Heart right ventricle (tissue), 16 donors: ENCODE measurements at regions of chr6 and their contacts with region 1.

Region 1: GRCh38 chr6:26025894-26026832 is 61.1 kb upstream of the HFE start:
- DNase-seq: peak; percentile 90 to 96
- ATAC-seq: peak; percentile 65 to 83 (median 74)
- H3K4me3 ChIP-seq: peak overlapping the region; percentile 51 to 79 (median 68)
- H3K27ac ChIP-seq: peak overlapping the region; percentile 86 to 96 (median 91)
- H3K4me1 ChIP-seq: peaks cover 0 to 52% (median 10%) of the 10 kb centered on the region in 9 donors
- H3K27me3 ChIP-seq: no peaks in the 10 kb centered on the region
- CTCF ChIP-seq: peak; percentile 48 to 93 (median 83)

Region 2: GRCh38 chr6:24720604-24721460 is 1305.3 kb before region 1 on chr6:
- intact Hi-C with region 1: loop called in 1 of 10 experiments (anchors 10 kb)
- DNase-seq: peak; percentile 100
- ATAC-seq: peak; percentile 93 to 97 (median 96)
- H3K4me3 ChIP-seq: peak overlapping the region; percentile 70 to 98 (median 86)
- H3K27ac ChIP-seq: peak overlapping the region; percentile 97 to 100 (median 99)
- H3K4me1 ChIP-seq: peaks cover 6 to 44% (median 33%) of the 10 kb centered on the region in 9 donors
- H3K27me3 ChIP-seq: no peaks in the 10 kb centered on the region
- CTCF ChIP-seq: no peak

Region 3: DNA sequence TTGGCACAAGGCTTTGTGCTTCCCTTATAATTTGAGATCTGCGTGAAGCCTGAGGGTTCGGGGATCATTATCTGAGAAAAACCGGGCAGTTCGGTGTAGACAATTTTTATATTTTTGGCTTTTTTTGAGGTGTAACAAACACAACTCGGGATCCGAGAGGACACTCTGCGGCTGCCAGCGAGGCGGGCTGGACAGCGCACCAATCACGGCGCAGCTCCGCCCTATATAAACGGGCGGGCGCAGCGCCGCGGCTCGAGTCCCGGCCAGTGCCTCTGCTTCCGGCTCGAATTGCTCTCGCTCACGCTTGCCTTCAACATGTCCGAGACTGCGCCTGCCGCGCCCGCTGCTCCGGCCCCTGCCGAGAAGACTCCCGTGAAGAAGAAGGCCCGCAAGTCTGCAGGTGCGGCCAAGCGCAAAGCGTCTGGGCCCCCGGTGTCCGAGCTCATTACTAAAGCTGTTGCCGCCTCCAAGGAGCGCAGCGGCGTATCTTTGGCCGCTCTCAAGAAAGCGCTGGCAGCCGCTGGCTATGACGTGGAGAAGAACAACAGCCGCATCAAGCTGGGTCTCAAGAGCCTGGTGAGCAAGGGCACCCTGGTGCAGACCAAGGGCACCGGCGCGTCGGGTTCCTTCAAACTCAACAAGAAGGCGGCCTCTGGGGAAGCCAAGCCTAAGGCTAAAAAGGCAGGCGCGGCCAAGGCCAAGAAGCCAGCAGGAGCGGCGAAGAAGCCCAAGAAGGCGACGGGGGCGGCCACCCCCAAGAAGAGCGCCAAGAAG is 130.1 kb after region 1 on chr6:
- intact Hi-C with region 1: loop called in 1 of 10 experiments (anchors 2 kb)
- DNase-seq: peak; percentile 90
- ATAC-seq: peak; percentile 85 to 92 (median 88)
- H3K4me3 ChIP-seq: peak overlapping the region; percentile 52 to 97 (median 79)
- H3K27ac ChIP-seq: peak overlapping the region; percentile 81 to 98 (median 94)
- H3K4me1 ChIP-seq: peaks cover 4 to 31% (median 21%) of the 10 kb centered on the region in 9 donors
- H3K27me3 ChIP-seq: no peaks in the 10 kb centered on the region
- CTCF ChIP-seq: peak in 2 of 9 donors; percentile 8 to 15

Region 4: DNA sequence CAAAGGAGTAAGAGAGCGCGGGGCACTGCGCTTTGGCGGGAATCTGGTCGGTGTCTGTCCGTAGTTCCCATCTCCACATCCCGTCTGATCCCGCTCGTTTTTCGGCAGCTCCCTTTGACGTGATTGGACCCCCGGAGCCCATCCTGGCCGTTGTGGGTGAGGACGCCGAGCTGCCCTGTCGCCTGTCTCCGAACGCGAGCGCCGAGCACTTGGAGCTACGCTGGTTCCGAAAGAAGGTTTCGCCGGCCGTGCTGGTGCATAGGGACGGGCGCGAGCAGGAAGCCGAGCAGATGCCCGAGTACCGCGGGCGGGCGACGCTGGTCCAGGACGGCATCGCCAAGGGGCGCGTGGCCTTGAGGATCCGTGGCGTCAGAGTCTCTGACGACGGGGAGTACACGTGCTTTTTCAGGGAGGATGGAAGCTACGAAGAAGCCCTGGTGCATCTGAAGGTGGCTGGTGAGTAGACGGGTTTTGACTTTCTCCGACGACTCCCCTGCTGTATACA is 475.4 kb after region 1 on chr6:
- intact Hi-C with region 1: no loop called
- DNase-seq: peak; percentile 7 to 31
- ATAC-seq: peak in 7 of 8 donors; percentile 28 to 62 (median 52)
- H3K4me3 ChIP-seq: peak overlapping the region; percentile 18 to 50 (median 40)
- H3K27ac ChIP-seq: no peak overlapping the region
- H3K4me1 ChIP-seq: peaks cover 0 to 13% (median 9%) of the 10 kb centered on the region in 9 donors
- H3K27me3 ChIP-seq: peaks cover 4 to 52% (median 46%) of the 10 kb centered on the region in 7 donors
- CTCF ChIP-seq: no peak

Region 5: DNA sequence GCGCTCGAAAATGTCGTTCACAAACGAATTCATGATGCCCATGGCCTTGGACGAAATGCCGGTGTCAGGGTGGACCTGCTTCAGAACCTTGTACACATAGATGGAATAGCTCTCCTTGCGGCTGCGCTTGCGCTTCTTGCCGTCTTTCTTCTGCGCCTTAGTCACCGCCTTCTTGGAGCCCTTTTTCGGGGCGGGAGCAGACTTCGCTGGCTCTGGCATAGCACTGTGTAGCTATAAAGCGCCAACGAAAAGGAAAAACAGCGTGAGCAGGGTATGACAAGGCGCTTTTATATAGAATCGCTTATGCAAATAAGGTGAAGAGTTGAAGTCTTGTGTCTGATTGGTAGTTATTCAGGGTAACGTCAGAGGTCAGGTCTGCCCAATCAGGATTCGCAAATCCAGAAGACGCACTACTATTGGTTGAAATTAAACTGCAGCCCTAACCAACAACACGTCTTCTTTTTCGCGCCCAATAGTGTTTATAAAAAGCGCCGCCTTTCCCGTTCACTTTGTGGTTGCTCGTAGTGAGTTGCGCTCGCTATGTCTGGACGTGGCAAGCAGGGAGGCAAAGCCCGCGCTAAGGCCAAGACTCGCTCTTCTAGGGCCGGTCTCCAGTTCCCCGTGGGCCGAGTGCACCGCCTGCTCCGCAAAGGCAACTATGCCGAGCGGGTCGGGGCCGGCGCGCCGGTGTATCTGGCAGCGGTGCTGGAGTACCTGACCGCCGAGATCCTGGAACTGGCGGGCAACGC is 1106.5 kb after region 1 on chr6:
- intact Hi-C with region 1: loop called in 2 of 10 experiments (anchors 10 kb)
- DNase-seq: peak; percentile 72 to 91
- ATAC-seq: peak; percentile 95 to 97 (median 96)
- H3K4me3 ChIP-seq: peak overlapping the region; percentile 31 to 67 (median 64)
- H3K27ac ChIP-seq: peak overlapping the region; percentile 11 to 90 (median 79)
- H3K4me1 ChIP-seq: peaks cover 0 to 42% (median 14%) of the 10 kb centered on the region in 9 donors
- H3K27me3 ChIP-seq: no peaks in the 10 kb centered on the region
- CTCF ChIP-seq: peak in 1 of 9 donors; percentile 6

Region 6: DNA sequence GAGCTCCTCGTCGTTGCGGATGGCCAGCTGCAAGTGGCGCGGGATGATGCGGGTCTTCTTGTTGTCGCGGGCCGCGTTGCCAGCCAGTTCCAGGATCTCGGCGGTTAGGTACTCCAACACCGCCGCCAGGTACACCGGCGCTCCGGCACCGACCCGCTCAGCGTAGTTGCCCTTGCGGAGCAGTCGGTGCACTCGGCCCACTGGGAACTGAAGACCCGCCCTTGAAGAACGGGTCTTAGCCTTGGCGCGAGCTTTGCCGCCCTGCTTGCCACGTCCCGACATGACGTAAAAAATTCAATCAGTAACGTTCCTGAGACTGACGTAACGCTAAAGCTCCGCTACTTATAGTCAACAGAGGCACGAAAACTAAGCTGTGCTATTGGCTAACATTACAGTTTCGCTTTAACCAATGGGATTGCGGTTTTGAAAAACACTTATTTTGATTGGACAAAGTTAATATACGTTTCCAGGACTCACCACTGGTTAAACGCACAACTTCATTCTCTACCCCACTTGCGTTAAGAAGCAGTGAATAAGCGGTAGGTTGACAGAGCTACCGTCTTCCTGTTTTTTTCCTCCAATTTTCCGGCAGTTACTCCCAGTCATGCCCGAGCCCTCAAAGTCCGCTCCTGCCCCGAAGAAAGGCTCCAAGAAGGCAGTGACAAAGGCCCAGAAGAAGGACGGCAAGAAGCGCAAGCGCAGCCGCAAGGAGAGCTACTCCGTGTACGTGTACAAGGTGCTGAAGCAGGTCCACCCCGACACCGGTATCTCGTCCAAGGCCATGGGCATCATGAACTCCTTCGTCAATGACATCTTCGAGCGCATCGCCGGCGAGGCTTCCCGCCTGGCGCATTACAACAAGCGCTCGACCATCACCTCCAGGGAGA is 1812.1 kb after region 1 on chr6:
- intact Hi-C with region 1: loop called in 1 of 10 experiments (anchors 10 kb)
- DNase-seq: peak; percentile 61 to 80
- ATAC-seq: peak; percentile 92 to 96 (median 95)
- H3K4me3 ChIP-seq: peak overlapping the region; percentile 61 to 95 (median 82)
- H3K27ac ChIP-seq: peak overlapping the region; percentile 86 to 98 (median 96)
- H3K4me1 ChIP-seq: peaks cover 0 to 39% (median 31%) of the 10 kb centered on the region in 9 donors
- H3K27me3 ChIP-seq: no peaks in the 10 kb centered on the region
- CTCF ChIP-seq: peak in 2 of 9 donors; percentile 7 to 8